ENCODE measurements at regions of chr2 and their contacts with region 1.

Region 1: DNA sequence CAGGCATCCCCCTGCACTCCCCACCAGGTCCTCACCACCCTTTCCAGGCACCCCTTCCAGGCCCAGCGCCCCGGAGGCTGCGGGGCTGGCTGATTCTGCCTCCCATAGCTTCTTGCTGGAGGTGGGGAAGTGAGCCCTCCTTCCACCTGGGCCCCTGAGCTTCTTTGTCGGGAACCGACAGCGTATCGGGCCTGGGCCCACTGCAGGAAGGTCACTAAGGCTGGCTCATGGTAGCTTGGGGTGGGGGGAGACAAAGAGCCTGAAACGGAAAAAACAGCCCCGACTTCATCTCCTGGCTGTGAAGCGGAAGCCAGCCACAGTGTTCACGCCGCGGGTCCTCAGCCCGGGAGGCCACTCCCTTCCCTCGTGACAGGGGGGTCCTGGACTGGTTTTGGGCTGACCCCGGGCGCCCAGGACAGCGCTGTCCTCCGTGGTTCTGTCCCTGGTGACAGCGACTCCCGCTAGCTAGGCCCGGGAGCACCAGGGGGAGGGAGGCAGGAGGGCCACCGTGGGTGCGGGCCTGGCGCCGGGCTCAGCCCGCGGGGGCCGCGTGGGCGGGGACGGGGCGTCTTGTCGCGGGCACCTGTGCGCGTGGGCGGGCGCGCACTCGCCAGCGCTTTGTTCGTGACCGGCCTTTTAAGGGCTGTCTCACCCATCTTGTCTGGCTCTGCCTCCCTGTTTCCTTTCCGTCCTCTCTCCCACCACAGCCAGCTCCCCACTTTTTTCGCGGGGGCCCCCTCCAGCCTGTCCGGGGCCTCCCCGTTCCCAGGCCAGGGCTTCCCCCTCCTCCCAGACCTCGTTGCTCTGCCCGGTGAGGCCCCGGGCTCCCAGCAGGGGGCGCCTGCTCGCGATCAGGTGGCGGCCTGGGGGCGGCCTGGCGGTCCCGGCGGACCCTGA is 64.9 kb downstream of the DNMT3A start:
- DNase-seq: peak; percentile 90
- CTCF ChIP-seq: peak; percentile 93

Region 2: DNA sequence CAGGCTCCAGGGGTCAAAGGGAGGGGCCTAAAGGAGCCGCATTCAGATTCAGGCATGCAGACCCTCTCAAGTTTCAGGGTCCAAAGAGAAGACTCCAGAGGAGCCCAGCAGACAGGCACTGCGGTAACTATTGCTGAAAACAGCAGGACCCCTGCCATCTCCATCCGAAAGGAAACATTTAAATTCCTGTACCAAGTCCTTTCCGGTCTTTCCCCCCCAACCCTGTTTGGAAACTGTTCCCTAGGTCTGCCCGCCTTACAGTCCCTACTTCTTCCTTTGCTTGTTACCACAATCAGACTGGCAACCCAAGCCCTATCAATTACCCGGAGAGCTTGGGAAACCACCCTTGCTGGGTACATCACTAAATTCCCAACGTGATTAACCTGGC is 17.1 kb before region 1 on chr2:
- CTCF ChIA-PET with region 1: interaction called, 19 read pairs
- POLR2A ChIA-PET with region 1: no interaction called
- DNase-seq: no peak
- CTCF ChIP-seq: no peak

Region 3: DNA sequence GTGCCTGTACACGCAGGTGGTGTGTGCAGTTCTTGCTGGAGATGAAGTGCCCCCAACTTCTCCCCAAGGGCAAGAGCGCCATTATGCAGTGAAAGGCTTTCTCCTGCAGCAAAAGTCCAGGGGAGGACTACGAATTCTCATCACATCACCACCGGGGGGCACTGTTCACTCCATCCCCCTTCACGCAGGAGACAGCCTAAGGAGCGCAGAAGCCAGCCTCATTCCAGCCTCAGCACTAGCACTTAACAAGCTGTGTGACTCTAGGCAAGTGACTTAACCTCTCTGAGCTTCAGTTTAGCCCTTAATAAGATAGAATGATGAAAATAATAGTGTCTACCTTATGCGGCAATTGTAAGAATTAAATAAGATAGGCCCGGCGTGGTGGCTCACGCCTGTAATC is 32.6 kb after region 1 on chr2:
- CTCF ChIA-PET with region 1: interaction called, 14 read pairs
- POLR2A ChIA-PET with region 1: no interaction called
- DNase-seq: peak; percentile 61
- CTCF ChIP-seq: peak; percentile 23

Region 4: GRCh38 chr2:25314514-25315315 is 37.9 kb after region 1 on chr2:
- CTCF ChIA-PET with region 1: interaction called, 14 read pairs
- POLR2A ChIA-PET with region 1: no interaction called
- DNase-seq: peak; percentile 89
- CTCF ChIP-seq: no peak

Region 5: DNA sequence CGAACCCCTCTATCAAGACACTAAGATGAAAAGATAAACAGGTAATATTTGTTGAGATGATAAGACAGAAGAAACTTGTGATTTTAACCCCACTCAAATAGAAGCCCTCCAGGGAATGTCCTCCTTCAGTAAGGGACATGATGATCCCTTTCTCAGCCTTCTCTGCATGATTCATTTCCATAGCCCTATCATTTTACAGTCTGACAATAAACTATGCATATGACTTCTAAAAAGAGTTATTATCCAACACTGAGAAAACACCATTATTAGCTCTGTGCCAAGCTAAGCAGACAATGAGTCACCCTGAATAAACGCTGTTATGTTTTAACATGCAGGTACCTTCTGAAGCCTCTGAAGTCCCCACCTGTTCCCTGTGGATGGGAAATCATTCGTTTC is 341.8 kb after region 1 on chr2:
- CTCF ChIA-PET with region 1: no interaction called
- POLR2A ChIA-PET with region 1: no interaction called
- DNase-seq: no peak
- CTCF ChIP-seq: no peak